PC-3 (cell line): ENCODE measurements at regions of chrX and their contacts with region 1.

Region 1: GRCh38 chrX:38803586-38804431 is 2.5 kb downstream of the MID1IP1 start:
- DNase-seq: peak; percentile 86
- ATAC-seq: peak; percentile 79
- H3K4me3 ChIP-seq: peak overlapping the region; percentile 96
- H3K27ac ChIP-seq: peak overlapping the region; percentile 85
- H3K4me1 ChIP-seq: peaks cover 40% of the 10 kb centered on the region
- H3K27me3 ChIP-seq: no peaks in the 10 kb centered on the region
- CTCF ChIP-seq: no peak

Region 2: DNA sequence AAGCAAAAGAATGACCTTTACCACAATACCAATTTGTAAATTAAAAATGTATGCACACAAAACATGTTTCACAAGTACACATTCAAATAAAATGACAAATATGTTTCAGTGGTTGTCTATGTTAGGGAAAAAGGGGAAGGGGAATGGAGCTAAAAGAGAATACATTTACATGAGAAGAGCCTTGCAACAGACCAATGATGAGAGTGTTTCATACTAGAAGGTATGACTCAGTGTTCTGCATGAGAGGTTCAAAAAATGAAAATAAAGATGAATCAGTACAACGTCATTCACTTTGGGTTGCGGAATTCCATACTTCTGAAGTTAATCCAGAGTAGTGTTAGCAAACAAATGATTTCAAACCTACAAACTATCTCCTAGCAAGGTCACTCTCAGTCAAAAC is 528.2 kb before region 1 on chrX:
- CTCF ChIA-PET with region 1: no interaction called
- POLR2A ChIA-PET with region 1: no interaction called
- intact Hi-C with region 1: loop called (anchors 10 kb)
- DNase-seq: peak; percentile 90
- ATAC-seq: peak; percentile 88
- H3K4me3 ChIP-seq: no peak overlapping the region
- H3K27ac ChIP-seq: peak overlapping the region; percentile 68
- H3K4me1 ChIP-seq: peaks cover 53% of the 10 kb centered on the region
- H3K27me3 ChIP-seq: no peaks in the 10 kb centered on the region
- CTCF ChIP-seq: no peak

Region 3: DNA sequence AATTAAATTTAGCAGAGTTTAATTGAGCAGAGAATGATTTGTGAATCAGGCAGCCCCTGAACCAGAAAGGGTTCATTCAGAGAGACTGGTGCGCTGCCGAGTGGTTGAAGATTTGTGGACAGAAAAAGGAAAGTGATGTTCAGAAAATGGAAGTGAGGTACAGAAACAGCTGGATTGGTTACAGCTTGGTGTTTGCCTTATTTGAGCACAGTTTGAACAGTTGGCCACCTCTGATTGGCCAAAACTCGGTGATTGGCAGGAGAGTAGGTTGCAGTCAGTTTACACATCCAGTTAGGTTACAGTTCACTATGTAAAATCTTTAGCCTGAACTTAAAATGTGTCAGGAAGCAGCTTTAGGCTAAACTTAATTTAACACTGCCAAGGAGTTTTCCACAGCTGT is 12.3 kb after region 1 on chrX:
- CTCF ChIA-PET with region 1: no interaction called
- POLR2A ChIA-PET with region 1: interaction called, 3 read pairs
- intact Hi-C with region 1: loop called (anchors 1 kb)
- DNase-seq: no peak
- ATAC-seq: no peak
- H3K4me3 ChIP-seq: no peak overlapping the region
- H3K27ac ChIP-seq: no peak overlapping the region
- H3K4me1 ChIP-seq: peaks cover 33% of the 10 kb centered on the region
- H3K27me3 ChIP-seq: no peaks in the 10 kb centered on the region
- CTCF ChIP-seq: no peak

Region 4: GRCh38 chrX:38985375-38985774 is 181.6 kb after region 1 on chrX:
- CTCF ChIA-PET with region 1: no interaction called
- POLR2A ChIA-PET with region 1: interaction called, 5 read pairs
- intact Hi-C with region 1: loop called (anchors 2 kb)
- DNase-seq: peak; percentile 58
- ATAC-seq: peak; percentile 54
- H3K4me3 ChIP-seq: no peak overlapping the region
- H3K27ac ChIP-seq: no peak overlapping the region
- H3K4me1 ChIP-seq: peaks cover 18% of the 10 kb centered on the region
- H3K27me3 ChIP-seq: no peaks in the 10 kb centered on the region
- CTCF ChIP-seq: peak; percentile 60